OCI-LY7 (cell line): ENCODE measurements at regions of chr5 and their contacts with region 1.

Region 1: GRCh38 chr5:30040488-30041118 is 1152.9 kb upstream of the CDH6 start:
- DNase-seq: peak; percentile 57
- H3K4me3 ChIP-seq: no peak overlapping the region
- H3K27ac ChIP-seq: no peak overlapping the region
- H3K4me1 ChIP-seq: no peaks in the 10 kb centered on the region
- CTCF ChIP-seq: peak; percentile 84

Region 2: GRCh38 chr5:30436691-30437090 is 396.1 kb after region 1 on chr5:
- CTCF ChIA-PET with region 1: no interaction called
- POLR2A ChIA-PET with region 1: no interaction called
- intact Hi-C with region 1: no loop called
- DNase-seq: peak; percentile 0
- H3K4me3 ChIP-seq: no peak overlapping the region
- H3K27ac ChIP-seq: no peak overlapping the region
- H3K4me1 ChIP-seq: no peaks in the 10 kb centered on the region
- CTCF ChIP-seq: no peak

Region 3: DNA sequence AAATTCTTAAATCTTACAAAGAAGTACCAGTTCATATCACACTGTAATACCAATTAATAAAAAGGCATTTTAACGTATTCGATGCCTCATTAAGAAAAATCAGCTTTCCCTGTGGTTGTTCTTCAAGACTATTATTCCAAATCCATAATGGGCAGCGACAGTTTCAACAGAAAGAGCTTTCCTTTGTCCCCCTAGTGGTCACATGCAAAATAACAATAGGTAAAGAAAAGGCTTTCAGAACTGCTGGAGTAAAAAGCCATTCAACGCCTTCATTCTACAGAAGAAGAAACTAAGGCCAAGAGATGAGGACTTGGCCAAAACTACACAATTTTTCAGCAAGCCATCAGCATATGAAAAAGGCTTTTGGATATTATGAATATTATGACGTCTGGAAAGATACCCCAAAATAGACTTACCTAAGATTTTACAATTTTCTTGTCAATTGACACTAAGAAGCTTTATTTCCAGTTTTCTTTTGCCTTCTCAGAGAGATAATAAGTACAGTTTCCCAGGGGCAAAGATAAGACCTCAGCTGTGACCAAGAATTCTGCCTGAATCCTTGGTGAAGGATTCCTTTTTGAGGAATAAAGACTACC is 1146.2 kb after region 1 on chr5:
- CTCF ChIA-PET with region 1: no interaction called
- POLR2A ChIA-PET with region 1: no interaction called
- intact Hi-C with region 1: loop called (anchors 1 kb)
- DNase-seq: peak; percentile 40
- H3K4me3 ChIP-seq: no peak overlapping the region
- H3K27ac ChIP-seq: no peak overlapping the region
- H3K4me1 ChIP-seq: no peaks in the 10 kb centered on the region
- CTCF ChIP-seq: peak; percentile 91

Region 4: GRCh38 chr5:31232273-31232888 is 1191.8 kb after region 1 on chr5:
- CTCF ChIA-PET with region 1: no interaction called
- POLR2A ChIA-PET with region 1: no interaction called
- intact Hi-C with region 1: loop called (anchors 10 kb)
- DNase-seq: peak; percentile 54
- H3K4me3 ChIP-seq: no peak overlapping the region
- H3K27ac ChIP-seq: no peak overlapping the region
- H3K4me1 ChIP-seq: no peaks in the 10 kb centered on the region
- CTCF ChIP-seq: peak; percentile 93

Region 5: DNA sequence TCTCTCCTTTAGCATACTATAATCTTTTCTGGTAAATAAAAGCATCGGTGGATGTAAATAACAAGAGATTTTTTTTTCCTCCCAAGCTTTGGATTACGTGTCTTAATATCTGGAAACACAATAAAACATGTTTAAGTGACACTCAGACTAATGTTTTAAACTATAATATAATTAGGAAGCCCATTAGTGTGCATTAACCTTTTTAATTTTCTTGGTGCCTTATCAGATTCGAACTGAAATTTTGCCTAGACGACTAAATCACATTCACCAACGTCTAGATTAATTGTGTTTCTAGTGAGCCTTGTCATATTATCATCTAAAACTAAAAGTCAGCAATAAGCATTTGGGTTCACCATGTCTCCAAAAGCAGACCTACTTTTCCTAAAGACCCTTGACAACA is 1263.1 kb after region 1 on chr5:
- CTCF ChIA-PET with region 1: no interaction called
- POLR2A ChIA-PET with region 1: interaction called, 12 read pairs
- intact Hi-C with region 1: no loop called
- DNase-seq: no peak
- H3K4me3 ChIP-seq: no peak overlapping the region
- H3K27ac ChIP-seq: no peak overlapping the region
- H3K4me1 ChIP-seq: no peaks in the 10 kb centered on the region
- CTCF ChIP-seq: no peak